ENCODE measurements at regions of chr16 and their contacts with region 1.

Region 1: DNA sequence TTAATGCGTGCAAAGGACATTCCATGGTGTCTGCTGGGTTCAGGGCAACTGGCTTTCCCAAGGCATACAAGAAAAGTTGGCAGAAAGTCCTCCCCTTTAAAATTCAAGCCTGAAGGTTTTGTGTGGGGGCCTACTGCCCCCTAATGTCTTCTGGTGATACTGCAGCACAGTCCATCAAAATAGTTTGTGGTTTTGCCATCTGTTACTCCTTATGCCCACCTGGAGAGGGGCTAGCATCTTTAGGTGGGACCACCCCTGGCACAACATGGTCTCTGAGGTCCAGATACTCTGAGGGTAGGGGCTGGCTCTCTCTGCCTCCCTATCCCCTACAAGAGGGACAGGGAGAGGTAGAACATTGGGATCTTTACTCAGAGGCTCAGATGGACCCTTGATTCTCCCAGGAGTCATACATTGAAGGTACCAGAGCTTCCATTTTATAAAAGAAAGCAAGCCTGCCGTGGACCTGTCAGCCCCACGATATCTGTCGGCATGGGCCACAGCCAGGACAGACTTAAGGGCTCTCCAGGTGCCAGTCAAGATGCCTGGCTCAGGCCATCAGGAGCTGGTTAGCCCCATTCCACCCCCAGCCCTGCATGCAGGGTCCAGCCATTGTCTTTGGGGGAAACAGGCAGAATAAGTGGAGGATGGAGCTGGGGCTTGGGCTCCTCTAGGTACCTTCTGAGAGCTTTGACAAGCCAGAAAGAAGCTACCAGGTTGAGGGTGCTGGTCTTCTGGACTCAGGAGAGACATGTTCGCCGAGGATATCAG is 6.3 kb downstream of the ESRP2 start:
- DNase-seq: peak; percentile 23
- H3K4me3 ChIP-seq: no peak overlapping the region
- H3K27ac ChIP-seq: no peak overlapping the region
- H3K4me1 ChIP-seq: peaks cover 15% of the 10 kb centered on the region
- H3K27me3 ChIP-seq: no peaks in the 10 kb centered on the region
- CTCF ChIP-seq: peak; percentile 80 to 88

Region 2: DNA sequence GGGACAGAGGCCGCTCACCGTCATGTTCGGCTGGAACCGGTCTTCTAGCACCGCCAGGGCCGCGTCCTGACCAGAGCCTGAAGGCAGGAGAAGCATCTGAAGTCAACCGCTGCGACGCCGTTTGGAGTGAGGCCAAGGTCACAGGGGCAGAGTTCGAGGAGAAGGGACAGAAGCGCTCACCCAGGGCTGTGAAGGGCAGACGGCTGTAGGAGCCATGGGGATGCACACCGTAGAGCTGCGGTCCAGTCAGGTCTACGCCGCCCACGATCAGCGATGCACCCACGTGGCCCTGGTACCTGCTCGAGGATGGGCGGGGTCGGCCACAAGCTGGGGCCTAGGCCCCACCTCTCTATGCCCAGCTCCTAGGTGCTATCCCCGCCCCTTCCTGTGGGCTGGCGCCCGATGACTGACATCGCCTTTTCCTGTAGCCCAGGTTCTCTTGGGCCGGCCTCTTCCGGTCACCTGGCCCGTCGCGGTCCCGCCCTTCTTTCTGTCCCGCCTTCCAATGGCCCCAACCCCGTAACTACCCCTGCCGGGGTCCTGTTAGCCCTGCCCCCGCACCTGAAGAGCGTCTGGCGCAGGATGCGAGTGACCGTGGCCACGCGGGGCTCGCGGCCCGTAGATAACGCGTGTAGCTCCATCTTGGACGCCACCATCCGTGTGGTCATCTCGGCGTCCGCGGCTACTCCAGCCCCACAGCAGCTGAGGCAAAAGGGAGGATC is 294.1 kb before region 1 on chr16:
- CTCF ChIA-PET with region 1: no interaction called
- dilution Hi-C with region 1: no loop called
- in situ Hi-C with region 1: no loop called
- intact Hi-C with region 1: loop called (anchors 5 kb)
- DNase-seq: peak; percentile 98
- H3K4me3 ChIP-seq: peak overlapping the region; percentile 61 to 88 (median 84)
- H3K27ac ChIP-seq: peak overlapping the region; percentile 57
- H3K4me1 ChIP-seq: peaks cover 18% of the 10 kb centered on the region
- H3K27me3 ChIP-seq: no peaks in the 10 kb centered on the region
- CTCF ChIP-seq: no peak

Region 3: DNA sequence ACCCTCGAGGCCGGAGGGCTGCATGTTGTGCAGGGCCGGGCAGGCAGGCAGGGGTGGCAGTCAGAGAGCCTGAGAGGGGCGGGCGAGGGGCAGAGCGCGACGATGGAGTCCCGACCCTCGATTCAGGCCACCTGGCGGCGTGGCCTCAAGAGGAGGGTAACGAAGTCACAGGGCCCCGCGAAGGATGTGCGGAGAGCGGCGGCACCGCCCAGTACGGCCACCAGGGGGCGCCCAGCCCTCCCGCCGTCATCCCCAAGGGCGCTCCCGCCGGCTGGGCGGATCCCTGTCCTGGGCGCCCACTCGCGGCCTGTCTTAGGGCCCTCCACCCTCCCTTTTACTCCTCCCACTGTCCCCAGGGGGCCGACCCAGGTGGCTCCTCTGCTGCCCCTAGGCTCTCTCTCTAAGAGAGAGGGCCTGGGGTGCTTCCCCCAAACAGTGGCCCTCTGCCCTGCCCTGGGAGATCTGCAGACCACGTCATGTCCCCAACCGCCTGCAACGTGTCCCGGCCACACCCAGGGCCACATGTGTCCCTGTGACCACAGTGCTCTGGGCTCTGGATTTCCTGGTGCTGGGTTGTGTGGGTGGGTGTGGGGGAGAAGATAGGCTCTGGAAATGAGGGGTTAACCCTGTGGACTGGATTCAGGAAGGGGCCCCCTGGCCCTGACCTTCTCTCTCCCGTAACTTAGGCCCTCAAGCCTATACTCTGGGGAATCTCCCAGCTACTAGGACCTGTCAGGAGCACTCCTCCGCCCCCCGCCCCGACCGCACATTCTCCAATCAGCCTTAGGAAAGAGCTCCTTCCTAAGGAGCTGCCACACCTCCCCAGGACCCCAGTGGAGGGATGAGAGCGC is 236.2 kb before region 1 on chr16:
- CTCF ChIA-PET with region 1: no interaction called
- dilution Hi-C with region 1: no loop called
- in situ Hi-C with region 1: no loop called
- intact Hi-C with region 1: loop called (anchors 5 kb)
- DNase-seq: peak; percentile 38
- H3K4me3 ChIP-seq: peak overlapping the region in 1 of 3 experiments; percentile 30
- H3K27ac ChIP-seq: no peak overlapping the region
- H3K4me1 ChIP-seq: peaks cover 8% of the 10 kb centered on the region
- H3K27me3 ChIP-seq: no peaks in the 10 kb centered on the region
- CTCF ChIP-seq: peak; percentile 66 to 94

Region 4: GRCh38 chr16:68064791-68065365 is 164.7 kb before region 1 on chr16:
- CTCF ChIA-PET with region 1: no interaction called
- dilution Hi-C with region 1: loop called (anchors 10 kb)
- in situ Hi-C with region 1: loop called in 1 of 2 experiments (anchors 10 kb)
- intact Hi-C with region 1: loop called (anchors 1 kb)
- DNase-seq: peak; percentile 56
- H3K4me3 ChIP-seq: no peak overlapping the region
- H3K27ac ChIP-seq: no peak overlapping the region
- H3K4me1 ChIP-seq: peaks cover 6% of the 10 kb centered on the region
- H3K27me3 ChIP-seq: no peaks in the 10 kb centered on the region
- CTCF ChIP-seq: peak; percentile 88 to 90

Region 5: DNA sequence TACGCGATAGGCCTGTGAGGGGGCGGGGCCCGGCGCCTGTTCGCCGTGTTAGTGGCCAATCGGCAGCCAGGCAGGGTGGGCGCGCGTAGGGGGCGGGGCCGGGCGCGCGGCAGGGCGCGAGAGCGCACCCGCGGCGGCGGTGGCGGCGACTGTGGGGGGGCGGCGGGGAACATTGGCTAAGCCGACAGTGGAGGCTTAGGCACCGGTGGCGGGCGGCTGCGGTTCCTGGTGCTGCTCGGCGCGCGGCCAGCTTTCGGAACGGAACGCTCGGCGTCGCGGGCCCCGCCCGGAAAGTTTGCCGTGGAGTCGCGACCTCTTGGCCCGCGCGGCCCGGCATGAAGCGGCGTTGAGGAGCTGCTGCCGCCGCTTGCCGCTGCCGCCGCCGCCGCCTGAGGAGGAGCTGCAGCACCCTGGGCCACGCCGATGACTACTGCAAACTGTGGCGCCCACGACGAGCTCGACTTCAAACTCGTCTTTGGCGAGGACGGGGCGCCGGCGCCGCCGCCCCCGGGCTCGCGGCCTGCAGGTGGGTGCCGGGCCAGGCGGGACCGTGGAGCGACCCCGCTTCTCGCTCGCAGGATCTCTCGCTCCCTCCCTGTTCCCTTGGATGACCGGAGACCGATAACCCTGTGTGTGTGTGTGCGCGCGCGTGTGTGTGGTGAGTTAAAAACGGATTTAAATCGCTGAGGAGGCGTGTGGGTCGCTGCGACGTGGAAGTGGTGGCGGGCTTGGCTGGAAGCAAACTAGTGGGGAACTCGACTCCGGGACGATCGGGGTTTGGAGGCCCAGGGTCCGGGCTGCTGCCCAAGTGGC is 144.2 kb before region 1 on chr16 and contains the start of gene NFATC3:
- CTCF ChIA-PET with region 1: no interaction called
- dilution Hi-C with region 1: no loop called
- in situ Hi-C with region 1: no loop called
- intact Hi-C with region 1: loop called (anchors 1 kb)
- DNase-seq: peak; percentile 93
- H3K4me3 ChIP-seq: peak within 1 kb of the TSS; percentile 73 to 84 (median 83)
- H3K27ac ChIP-seq: peak within 1 kb of the TSS; percentile 52
- H3K4me1 ChIP-seq: peaks cover 29% of the 10 kb centered on the region
- H3K27me3 ChIP-seq: no peaks in the 10 kb centered on the region
- CTCF ChIP-seq: no peak
- total RNA-seq, gene NFATC3: 19.2 to 27.3 TPM

Region 6: DNA sequence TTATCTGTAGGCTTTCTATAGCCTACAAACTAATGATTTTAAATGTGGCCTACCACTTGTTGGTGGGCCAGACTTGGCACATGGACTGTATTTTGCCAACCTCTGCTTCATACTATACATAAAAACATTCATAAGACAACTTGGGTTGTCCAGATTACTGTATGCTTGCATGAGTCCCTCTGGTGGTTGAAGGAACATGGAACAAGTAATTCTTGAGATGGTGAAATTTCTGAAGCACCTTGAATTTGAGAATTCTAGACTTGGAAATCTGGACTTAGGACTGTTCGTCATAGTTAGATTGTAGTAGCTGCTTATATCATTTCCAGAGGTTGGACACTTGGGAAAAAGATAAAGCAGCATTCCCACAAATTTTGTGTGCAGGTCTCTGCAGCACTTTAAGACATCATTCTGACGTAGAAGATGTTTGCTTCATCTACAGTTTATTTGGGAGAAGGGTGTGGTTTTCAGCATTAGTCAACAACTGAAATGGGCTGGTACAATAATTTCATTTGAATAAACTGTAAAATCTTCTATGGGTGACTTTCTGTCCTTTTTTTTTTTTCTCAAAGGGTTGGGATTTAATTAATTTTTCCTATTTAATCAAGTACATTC is 113.3 kb before region 1 on chr16:
- CTCF ChIA-PET with region 1: no interaction called
- dilution Hi-C with region 1: no loop called
- in situ Hi-C with region 1: no loop called
- intact Hi-C with region 1: loop called (anchors 1 kb)
- DNase-seq: peak; percentile 20
- H3K4me3 ChIP-seq: no peak overlapping the region
- H3K27ac ChIP-seq: no peak overlapping the region
- H3K4me1 ChIP-seq: no peaks in the 10 kb centered on the region
- H3K27me3 ChIP-seq: no peaks in the 10 kb centered on the region
- CTCF ChIP-seq: peak; percentile 50 to 71

Region 7: GRCh38 chr16:68382296-68382718 is 152.7 kb after region 1 on chr16:
- CTCF ChIA-PET with region 1: no interaction called
- dilution Hi-C with region 1: no loop called
- in situ Hi-C with region 1: no loop called
- intact Hi-C with region 1: no loop called
- DNase-seq: no peak
- H3K4me3 ChIP-seq: no peak overlapping the region
- H3K27ac ChIP-seq: no peak overlapping the region
- H3K4me1 ChIP-seq: no peaks in the 10 kb centered on the region
- H3K27me3 ChIP-seq: no peaks in the 10 kb centered on the region
- CTCF ChIP-seq: peak in 1 of 2 donors; percentile 30

Region 8: GRCh38 chr16:68460067-68460466 is 230.5 kb after region 1 on chr16:
- CTCF ChIA-PET with region 1: no interaction called
- dilution Hi-C with region 1: no loop called
- in situ Hi-C with region 1: no loop called
- intact Hi-C with region 1: no loop called
- DNase-seq: no peak
- H3K4me3 ChIP-seq: no peak overlapping the region
- H3K27ac ChIP-seq: no peak overlapping the region
- H3K4me1 ChIP-seq: no peaks in the 10 kb centered on the region
- H3K27me3 ChIP-seq: peaks cover 6% of the 10 kb centered on the region
- CTCF ChIP-seq: no peak

Measured in mammary epithelial cell (primary cell).